Endothelial cell of umbilical vein (primary cell): ENCODE measurements at regions of chr2 and their contacts with region 1.

Region 1: GRCh38 chr2:229273723-229274338 is 2.7 kb upstream of the PID1 start:
- DNase-seq: peak; percentile 21
- H3K4me3 ChIP-seq: no peak overlapping the region
- H3K27ac ChIP-seq: no peak overlapping the region
- H3K4me1 ChIP-seq: no peaks in the 10 kb centered on the region
- H3K27me3 ChIP-seq: no peaks in the 10 kb centered on the region
- CTCF ChIP-seq: peak; percentile 45 to 51
- POLR2A ChIP-seq: no peak

Region 2: DNA sequence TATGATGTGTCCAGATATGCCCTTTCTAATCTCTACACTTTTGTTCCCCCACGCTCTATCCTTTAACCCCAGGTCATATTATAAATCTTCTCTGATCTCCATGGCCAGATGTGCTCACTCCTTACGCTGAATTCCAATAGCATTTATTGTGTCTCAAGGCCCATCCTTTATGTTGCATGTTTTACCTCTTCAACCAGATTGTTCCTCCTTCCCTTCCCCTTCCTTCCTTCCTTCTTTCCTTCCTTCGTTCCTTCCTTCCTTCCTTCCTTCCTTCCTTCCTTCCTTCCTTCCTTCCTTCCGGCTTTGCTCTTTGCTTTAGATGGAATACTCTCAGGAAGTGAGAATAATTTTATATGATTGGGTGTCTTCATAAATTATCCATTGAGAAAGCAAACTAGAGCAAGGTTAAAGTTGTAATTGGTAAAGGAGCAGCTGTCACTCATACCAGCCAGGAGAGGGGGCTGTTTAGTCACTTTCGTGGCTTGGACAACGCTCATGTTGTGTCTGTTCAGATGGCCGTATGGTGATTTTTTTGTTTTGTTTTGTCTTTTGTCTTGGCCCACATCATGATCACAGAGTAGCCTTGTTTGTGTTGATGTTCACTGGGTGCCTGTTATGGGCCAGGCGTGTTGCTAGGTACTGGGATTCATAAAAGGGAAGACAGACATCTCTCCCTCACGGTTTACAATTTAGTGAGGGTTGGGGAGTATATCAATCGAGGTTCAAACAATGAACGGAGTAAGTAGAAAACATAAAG is 1334.4 kb before region 1 on chr2:
- CTCF ChIA-PET with region 1: interaction called, 11 read pairs
- POLR2A ChIA-PET with region 1: no interaction called
- dilution Hi-C with region 1: no loop called
- intact Hi-C with region 1: no loop called
- DNase-seq: peak; percentile 22
- H3K4me3 ChIP-seq: no peak overlapping the region
- H3K27ac ChIP-seq: no peak overlapping the region
- H3K4me1 ChIP-seq: no peaks in the 10 kb centered on the region
- H3K27me3 ChIP-seq: no peaks in the 10 kb centered on the region
- CTCF ChIP-seq: peak; percentile 32 to 40
- POLR2A ChIP-seq: no peak

Region 3: DNA sequence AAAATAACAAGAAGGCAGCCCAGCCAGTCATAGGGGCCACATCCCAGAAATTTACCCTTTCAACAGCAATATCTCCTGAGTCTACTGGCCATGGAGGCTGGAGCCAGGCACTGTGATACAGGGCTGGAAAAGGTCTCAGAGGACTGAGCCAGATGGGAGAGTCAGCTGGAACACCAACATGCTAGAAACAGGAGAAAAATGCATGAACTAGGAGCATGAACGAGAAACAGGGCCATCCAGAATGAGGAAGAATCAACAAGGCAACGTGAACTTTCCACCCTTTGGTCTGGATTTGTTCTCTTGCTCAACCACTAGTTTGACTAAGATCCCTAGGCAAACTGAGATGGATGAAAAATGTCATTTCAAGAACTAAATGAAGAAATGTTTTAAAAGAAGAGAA is 15.8 kb before region 1 on chr2:
- CTCF ChIA-PET with region 1: no interaction called
- POLR2A ChIA-PET with region 1: no interaction called
- dilution Hi-C with region 1: no loop called
- intact Hi-C with region 1: no loop called
- DNase-seq: no peak
- H3K4me3 ChIP-seq: no peak overlapping the region
- H3K27ac ChIP-seq: no peak overlapping the region
- H3K4me1 ChIP-seq: no peaks in the 10 kb centered on the region
- H3K27me3 ChIP-seq: no peaks in the 10 kb centered on the region
- CTCF ChIP-seq: no peak
- POLR2A ChIP-seq: no peak